Activated CD4-positive, alpha-beta T cell treated with anti-CD3 and anti-CD28 coated beads for 36 hours (primary cell): ENCODE measurements at regions of chr19 and their contacts with region 1.

Region 1: DNA sequence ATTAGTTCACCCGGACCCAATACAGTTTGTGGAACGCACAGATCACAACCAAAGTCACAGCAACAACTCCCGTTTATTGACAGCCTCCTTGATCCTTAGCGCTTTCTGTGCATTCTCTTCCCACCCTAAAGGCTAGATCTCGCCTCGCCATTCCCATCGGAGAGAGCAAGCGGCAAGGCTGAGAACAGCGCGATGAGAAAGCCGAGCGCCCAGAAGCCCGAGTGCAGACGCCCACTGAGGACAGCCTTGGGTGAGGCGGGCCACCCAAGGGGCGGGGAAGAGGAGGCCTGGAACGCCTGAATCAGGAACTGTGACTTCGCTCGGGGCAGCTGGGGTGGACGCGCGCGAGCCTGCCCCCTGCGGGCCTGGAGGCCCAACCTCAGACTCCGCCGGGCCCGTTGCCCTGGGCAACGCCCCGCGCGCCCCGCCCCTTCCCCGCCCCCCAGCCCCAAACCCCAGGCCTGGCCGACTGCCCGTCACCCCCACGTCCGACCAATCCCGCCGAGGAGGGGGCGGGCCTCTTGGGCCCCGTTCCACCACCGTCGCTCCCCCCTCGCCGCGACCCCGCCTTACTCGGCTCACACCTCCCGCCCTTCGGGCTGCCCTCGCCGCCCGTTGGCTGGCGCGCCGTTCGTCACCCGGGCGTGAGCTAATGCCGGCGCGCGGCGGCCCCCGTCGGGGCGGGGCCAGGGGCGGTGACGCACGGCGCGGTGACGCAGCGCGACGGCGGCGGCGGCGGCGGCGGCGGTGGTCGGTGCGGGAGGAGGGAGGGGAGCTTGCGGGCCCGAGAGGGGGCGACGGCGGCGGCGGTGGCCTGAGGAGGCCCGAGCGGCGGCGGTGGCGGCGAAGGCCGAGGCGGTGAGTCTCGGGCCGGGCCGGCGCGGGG is at the start of gene SAMD4B:
- DNase-seq: peak; percentile 100
- ATAC-seq: peak; percentile 90
- H3K4me3 Mint-ChIP-seq: peak within 1 kb of the TSS; percentile 83
- H3K27ac Mint-ChIP-seq: peak within 1 kb of the TSS; percentile 88
- H3K4me1 Mint-ChIP-seq: peaks cover 69% of the 10 kb centered on the region
- H3K27me3 Mint-ChIP-seq: no peaks in the 10 kb centered on the region
- total RNA-seq, gene SAMD4B: 45.2 to 46.9 TPM

Region 2: GRCh38 chr19:39031368-39032062 is 310.4 kb before region 1 on chr19:
- CTCF ChIA-PET with region 1: no interaction called
- POLR2A ChIA-PET with region 1: no interaction called
- intact Hi-C with region 1: loop called in 1 of 2 experiments (anchors 1 kb)
- DNase-seq: peak; percentile 91
- ATAC-seq: peak; percentile 97
- H3K4me3 Mint-ChIP-seq: peak overlapping the region; percentile 58
- H3K27ac Mint-ChIP-seq: no peak overlapping the region
- H3K4me1 Mint-ChIP-seq: peaks cover 5% of the 10 kb centered on the region
- H3K27me3 Mint-ChIP-seq: peaks cover 24% of the 10 kb centered on the region

Region 3: DNA sequence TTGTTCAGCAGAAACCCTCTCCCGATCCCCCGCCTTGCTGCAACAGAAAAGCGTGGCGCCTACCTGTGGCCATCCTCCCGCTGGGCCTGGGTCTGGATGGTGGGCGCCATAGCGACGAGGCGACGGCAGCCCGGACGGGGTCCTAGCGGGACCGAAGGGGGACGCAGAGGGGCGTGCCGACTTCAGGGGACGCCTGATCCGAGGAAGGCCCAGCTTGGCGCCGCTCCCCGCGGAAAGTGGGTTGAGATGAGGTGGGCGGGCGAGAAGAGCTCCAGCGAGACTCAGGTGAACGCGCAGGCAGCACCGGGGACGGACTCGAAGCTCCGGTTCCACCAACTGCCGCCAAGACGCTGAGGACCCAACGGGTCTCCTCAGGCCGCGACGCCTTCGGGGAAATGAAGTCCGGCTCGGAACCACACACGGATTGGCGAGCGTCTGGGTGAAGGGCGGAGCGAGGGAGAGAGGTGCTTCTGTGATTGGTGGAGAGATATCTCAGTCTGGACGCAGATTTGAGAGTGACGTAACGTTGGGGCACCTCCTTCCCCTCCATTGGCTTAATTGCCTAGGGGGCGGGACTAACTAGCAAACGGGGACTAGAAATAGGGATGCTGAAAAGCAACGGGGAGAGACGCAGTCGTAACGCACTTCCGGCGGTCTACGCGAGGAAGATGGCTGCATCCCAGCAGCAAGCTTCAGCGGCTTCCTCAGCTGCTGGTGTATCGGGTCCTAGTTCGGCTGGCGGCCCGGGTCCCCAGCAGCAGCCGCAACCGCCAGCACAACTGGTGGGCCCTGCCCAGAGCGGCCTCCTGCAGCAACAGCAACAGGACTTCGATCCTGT is 49.0 kb after region 1 on chr19 and contains the starts of genes MED29 and PAF1:
- CTCF ChIA-PET with region 1: interaction called, 5 read pairs
- POLR2A ChIA-PET with region 1: interaction called, 6 read pairs
- intact Hi-C with region 1: loop called (anchors 1 to 2 kb)
- DNase-seq: peak; percentile 98
- ATAC-seq: peak; percentile 97
- H3K4me3 Mint-ChIP-seq: peak within 1 kb of the TSS; percentile 99
- H3K27ac Mint-ChIP-seq: peak within 1 kb of the TSS; percentile 98
- H3K4me1 Mint-ChIP-seq: peaks cover 28% of the 10 kb centered on the region
- H3K27me3 Mint-ChIP-seq: no peaks in the 10 kb centered on the region
- total RNA-seq, gene MED29: 24.0 to 34.6 TPM
- total RNA-seq, gene PAF1: 40.4 to 54.2 TPM

Region 4: DNA sequence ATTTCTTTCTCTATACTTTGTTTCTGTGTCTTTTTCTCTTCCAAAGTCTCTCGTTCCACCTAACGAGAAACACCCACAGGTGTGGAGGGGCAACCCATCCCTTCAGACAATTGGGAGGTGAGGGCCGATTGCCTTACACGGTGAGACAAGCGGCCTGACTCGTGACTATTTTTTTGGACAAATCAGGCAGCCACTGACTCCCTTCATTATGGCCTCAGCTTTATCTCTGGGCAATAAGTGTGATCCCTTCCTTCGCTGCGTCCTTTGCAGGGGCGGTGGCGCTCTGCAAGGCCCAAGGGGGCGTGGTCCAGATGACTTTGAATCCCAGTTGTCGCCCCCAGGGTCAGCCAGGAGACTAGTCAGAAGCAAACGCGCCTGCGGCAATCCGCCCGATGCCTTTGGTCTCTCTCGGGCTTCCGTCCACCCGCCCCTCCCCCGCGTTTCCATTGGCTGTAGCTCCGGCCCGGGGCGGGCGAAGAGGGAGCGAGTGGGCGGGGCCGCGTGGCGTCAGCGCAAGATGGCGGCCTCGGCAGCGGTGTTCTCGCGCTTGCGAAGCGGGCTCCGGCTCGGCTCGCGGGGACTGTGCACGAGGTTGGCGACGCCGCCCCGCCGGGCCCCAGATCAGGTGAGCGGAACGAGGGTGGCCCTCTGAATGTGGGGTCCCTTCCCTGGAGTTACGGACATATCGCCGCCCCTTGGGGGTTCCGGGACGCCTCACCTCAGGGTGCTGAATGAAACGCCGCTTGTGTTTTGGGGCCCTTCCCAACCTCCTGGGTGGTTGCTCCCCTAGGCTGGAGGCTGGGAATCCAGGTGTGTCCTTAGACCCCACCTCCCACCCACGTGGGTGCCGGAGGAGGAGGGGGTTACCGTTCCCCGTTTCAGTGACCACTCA is 138.6 kb after region 1 on chr19 and contains the start of gene TIMM50:
- CTCF ChIA-PET with region 1: no interaction called
- POLR2A ChIA-PET with region 1: no interaction called
- intact Hi-C with region 1: loop called in 1 of 2 experiments (anchors 5 kb)
- DNase-seq: peak; percentile 100
- ATAC-seq: peak; percentile 94
- H3K4me3 Mint-ChIP-seq: peak within 1 kb of the TSS; percentile 95
- H3K27ac Mint-ChIP-seq: peak within 1 kb of the TSS; percentile 92
- H3K4me1 Mint-ChIP-seq: peaks cover 24% of the 10 kb centered on the region
- H3K27me3 Mint-ChIP-seq: no peaks in the 10 kb centered on the region
- total RNA-seq, gene TIMM50: 99.4 to 126 TPM

Region 5: DNA sequence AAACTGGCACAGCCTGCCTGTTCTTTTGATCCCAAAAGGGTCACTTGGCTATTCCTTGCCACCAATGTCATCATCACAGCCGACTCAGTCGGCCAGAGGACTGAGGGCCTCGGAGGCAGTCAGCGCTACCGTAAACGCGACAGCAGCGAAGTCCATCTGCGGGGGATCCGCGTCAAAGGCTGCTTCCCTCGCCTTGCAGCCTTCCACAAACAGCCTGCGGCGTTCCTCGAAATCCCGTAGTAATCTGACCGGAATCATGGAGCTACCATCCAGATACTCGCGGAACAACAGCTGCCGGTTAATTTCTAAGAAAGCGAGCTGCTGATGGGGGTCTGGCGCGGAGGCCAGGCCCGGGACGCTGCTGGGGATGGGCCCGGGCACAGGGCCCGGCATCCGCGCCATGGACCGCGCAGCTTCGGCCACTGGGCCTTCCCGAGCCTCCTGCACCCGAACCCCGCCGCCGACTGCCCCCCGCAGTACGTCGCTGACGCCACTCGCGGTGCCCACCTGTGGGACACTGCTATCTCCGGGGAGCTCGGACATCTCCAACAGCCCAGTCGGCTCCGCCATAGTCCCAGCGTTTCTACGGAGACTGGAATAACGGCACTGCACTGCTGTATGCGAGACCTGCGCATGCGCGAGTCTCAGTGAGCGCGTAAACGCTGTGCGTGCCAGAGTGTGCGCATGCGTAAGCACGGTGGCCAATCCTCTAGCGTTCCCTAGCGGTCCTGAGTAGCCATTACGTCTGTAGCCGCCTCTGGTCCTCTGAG is 190.5 kb after region 1 on chr19 and contains the start of gene EID2B:
- CTCF ChIA-PET with region 1: interaction called, 5 read pairs
- POLR2A ChIA-PET with region 1: no interaction called
- intact Hi-C with region 1: loop called (anchors 5 kb)
- DNase-seq: peak; percentile 97
- ATAC-seq: peak; percentile 97
- H3K4me3 Mint-ChIP-seq: peak within 1 kb of the TSS; percentile 93
- H3K27ac Mint-ChIP-seq: peak within 1 kb of the TSS; percentile 86
- H3K4me1 Mint-ChIP-seq: peaks cover 26% of the 10 kb centered on the region
- H3K27me3 Mint-ChIP-seq: no peaks in the 10 kb centered on the region
- total RNA-seq, gene EID2B: 1.4 to 3.5 TPM

Region 6: DNA sequence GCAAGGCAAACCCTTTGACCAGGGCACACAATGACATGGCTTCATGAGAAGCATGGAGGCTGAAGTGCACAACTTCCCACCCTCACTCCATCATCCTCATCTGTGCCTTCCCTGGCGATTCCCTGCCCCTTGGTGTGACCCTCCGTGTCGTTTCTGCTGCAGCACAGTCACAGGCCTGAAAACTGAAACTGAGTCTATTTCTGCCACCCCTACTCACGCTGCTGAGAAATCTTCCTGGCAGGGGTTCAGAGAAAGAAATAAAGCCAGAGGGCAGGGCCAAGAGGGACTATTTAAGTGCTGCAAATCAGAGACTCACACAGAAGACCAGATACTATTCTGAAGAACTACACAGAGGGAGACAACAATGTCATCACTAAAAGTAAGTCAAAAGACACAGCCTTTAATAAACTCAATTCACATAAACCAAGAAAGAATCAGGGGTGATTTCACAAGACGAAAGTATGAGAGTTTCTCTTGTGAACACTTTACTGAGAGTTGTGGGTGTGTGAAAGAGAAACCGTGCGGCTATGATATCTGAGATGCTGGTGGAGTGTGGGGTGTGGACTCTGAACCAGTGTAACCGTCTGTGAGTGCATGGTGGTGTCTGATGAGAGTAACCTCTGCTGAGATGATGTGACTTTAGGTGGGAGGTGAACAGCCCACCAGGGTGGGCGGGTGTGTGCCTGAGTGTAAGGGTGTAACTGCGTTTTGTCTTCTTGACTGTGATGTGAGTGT is 337.3 kb after region 1 on chr19:
- CTCF ChIA-PET with region 1: no interaction called
- POLR2A ChIA-PET with region 1: no interaction called
- intact Hi-C with region 1: loop called in 1 of 2 experiments (anchors 5 kb)
- DNase-seq: peak; percentile 76
- ATAC-seq: peak; percentile 81
- H3K4me3 Mint-ChIP-seq: peak overlapping the region; percentile 63
- H3K27ac Mint-ChIP-seq: peak overlapping the region; percentile 79
- H3K4me1 Mint-ChIP-seq: peaks cover 44% of the 10 kb centered on the region
- H3K27me3 Mint-ChIP-seq: peaks cover 2% of the 10 kb centered on the region

Region 7: DNA sequence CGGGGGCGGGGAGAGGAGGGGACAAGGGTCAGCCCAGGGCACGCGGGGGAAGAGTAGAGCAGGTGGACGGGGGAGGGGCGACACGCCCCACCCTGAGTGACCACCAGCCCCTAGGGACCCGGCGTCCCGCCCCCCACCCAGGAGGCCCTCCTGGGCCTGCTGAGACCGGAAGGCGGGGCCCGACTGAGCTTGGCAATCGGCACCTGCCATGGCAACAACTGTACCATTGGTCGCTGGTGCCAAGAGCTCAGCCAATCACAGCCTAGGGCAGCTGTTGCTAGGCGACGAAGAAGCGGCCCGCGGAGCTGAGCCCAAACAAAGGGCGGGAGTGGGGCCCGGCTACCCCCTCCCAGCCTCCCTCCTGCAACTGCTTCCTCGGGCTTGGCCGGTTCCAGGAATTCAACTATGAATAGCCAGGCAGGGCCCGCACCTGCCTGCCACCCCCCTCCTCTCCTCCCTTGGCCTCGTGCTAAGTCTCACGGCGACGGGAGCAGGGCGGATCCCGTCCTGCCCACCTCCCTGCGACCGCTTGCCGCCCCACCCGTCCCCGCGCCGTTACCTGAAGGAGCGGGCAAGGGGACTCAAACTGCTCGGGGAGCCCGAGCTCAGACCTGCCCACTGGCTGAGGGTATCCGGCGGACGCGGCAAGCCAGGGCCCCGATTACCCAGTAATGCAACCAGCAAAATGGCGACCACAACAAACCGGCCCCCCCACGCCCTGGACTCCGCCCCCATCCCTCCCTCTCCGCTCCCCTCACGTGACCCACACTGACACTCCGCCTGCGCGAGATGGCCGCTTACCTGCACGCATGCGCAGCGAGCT is 491.7 kb after region 1 on chr19 and contains the start of gene DYRK1B:
- CTCF ChIA-PET with region 1: no interaction called
- POLR2A ChIA-PET with region 1: no interaction called
- intact Hi-C with region 1: loop called in 1 of 2 experiments (anchors 5 kb)
- DNase-seq: peak; percentile 99
- ATAC-seq: peak; percentile 92
- H3K4me3 Mint-ChIP-seq: peak within 1 kb of the TSS; percentile 64
- H3K27ac Mint-ChIP-seq: peak within 1 kb of the TSS; percentile 84
- H3K4me1 Mint-ChIP-seq: peaks cover 25% of the 10 kb centered on the region
- H3K27me3 Mint-ChIP-seq: no peaks in the 10 kb centered on the region
- total RNA-seq, gene DYRK1B: 4.8 to 6.9 TPM